ENCODE measurements at regions of chr17 and their contacts with region 1.

Region 1: GRCh38 chr17:15409721-15410250 is 57.6 kb downstream of the CDRT4 start:
- DNase-seq: peak; percentile 80 to 81
- H3K4me3 ChIP-seq: no peak overlapping the region
- H3K27ac ChIP-seq: peak overlapping the region; percentile 81 to 92 (median 88)
- H3K4me1 ChIP-seq: peaks cover 54 to 77% of the 10 kb centered on the region in 2 donors
- H3K27me3 ChIP-seq: no peaks in the 10 kb centered on the region
- CTCF ChIP-seq: no peak
- POLR2A ChIP-seq: peak; percentile 58 to 74

Region 2: DNA sequence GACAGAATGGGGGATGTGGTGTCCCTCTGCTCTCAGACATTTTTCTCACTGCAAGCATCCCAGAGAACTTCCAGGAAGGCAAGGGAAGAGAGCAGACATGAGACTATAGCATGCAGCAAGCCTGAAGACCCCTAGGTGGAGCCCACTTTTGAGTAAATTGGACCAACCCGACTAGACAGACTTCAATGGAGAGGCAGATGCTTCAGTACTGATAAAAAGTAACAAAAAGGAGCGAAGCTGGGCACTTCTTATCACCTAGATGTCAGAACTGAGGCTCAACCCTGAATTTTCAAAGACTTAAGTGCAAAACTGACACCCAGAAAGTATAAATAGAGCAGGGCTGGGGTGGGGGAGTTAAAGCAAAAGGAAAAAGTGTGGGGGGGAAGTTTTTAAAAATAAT is 275.4 kb before region 1 on chr17:
- intact Hi-C with region 1: no loop called
- DNase-seq: no peak
- H3K4me3 ChIP-seq: no peak overlapping the region
- H3K27ac ChIP-seq: no peak overlapping the region
- H3K4me1 ChIP-seq: no peaks in the 10 kb centered on the region
- H3K27me3 ChIP-seq: no peaks in the 10 kb centered on the region
- CTCF ChIP-seq: no peak
- POLR2A ChIP-seq: no peak

Region 3: GRCh38 chr17:15273141-15273793 is 136.5 kb before region 1 on chr17:
- intact Hi-C with region 1: loop called (anchors 10 kb)
- DNase-seq: no peak
- H3K4me3 ChIP-seq: no peak overlapping the region
- H3K27ac ChIP-seq: no peak overlapping the region
- H3K4me1 ChIP-seq: peaks cover 5 to 17% of the 10 kb centered on the region in 2 donors
- H3K27me3 ChIP-seq: no peaks in the 10 kb centered on the region
- CTCF ChIP-seq: no peak
- POLR2A ChIP-seq: no peak